GM12878 (cell line): ENCODE measurements at regions of chr2 and their contacts with region 1.

Region 1: GRCh38 chr2:113858764-113859163 is 31.1 kb upstream of the ACTR3 start:
- DNase-seq: no peak
- ATAC-seq: no peak
- H3K4me3 ChIP-seq: no peak overlapping the region
- H3K27ac ChIP-seq: no peak overlapping the region; the same call in 1 of the 2 replicates
- H3K4me1 ChIP-seq: peaks cover 43% of the 10 kb centered on the region
- H3K27me3 ChIP-seq: no peaks in the 10 kb centered on the region
- CTCF ChIP-seq: no peak
- EP300 ChIP-seq: no peak
- POLR2A ChIP-seq: no peak
- RAD21 ChIP-seq: no peak

Region 2: DNA sequence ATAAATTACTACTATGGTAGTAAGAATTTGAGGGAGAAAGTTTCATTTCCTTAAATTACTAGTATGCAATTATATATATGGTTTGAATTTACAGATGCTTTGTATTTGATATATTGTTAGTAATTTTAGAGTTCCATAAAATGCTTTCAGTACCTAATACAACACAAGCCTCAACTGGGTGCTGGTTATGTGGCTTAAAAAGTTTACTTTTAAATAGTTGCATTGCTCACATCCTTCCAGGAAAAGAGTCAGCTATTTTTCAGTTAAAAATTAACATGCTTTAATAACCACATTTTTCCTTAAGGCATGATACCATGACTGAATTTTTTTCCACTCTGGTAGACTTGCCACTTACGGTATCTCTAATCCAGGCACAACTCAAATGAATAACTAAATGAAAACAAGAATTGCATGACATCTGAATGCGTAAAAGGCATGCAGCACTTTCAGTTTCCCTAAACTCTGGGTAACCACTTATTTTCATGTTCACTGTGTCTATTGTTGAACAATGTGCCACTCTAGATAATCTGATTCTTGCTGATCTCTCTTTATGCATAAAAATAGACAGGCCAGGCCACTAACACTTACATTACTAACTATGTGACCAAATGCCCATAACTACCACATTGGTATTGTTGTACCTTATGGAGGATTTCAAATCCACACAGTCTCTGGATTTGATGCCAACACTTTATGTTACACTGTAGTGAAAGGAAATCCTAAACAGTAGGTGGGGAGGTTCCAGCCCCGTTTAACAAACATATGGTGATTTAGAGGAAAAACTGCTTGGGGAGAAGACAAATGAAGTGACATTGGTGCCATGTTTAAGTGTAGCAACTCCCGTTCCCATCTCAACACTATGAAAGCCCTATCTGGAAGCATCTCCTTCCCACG is 66.8 kb before region 1 on chr2:
- CTCF ChIA-PET with region 1: no interaction called
- POLR2A ChIA-PET with region 1: no interaction called
- RAD21 ChIA-PET with region 1: no interaction called
- SMC1A ChIA-PET with region 1: no interaction called
- in situ Hi-C with region 1: no loop called
- intact Hi-C with region 1: loop called (anchors 5 kb)
- DNase-seq: peak; percentile 61
- ATAC-seq: peak; percentile 96
- H3K4me3 ChIP-seq: no peak overlapping the region
- H3K27ac ChIP-seq: no peak overlapping the region
- H3K4me1 ChIP-seq: peaks cover 10% of the 10 kb centered on the region
- H3K27me3 ChIP-seq: no peaks in the 10 kb centered on the region
- CTCF ChIP-seq: no peak
- EP300 ChIP-seq: peak; percentile 90 to 94; a peak in 3 of 4 replicates
- POLR2A ChIP-seq: no peak
- RAD21 ChIP-seq: no peak